ENCODE measurements at regions of chr12 and their contacts with region 1.

Region 1: GRCh38 chr12:121678716-121679580 is 9.5 kb upstream of the MORN3 start:
- DNase-seq: no peak
- ATAC-seq: no peak
- H3K4me3 ChIP-seq: no peak overlapping the region
- H3K27ac ChIP-seq: no peak overlapping the region
- H3K4me1 ChIP-seq: peaks cover 4% of the 10 kb centered on the region
- H3K27me3 ChIP-seq: no peaks in the 10 kb centered on the region
- CTCF ChIP-seq: no peak

Region 2: GRCh38 chr12:121550974-121551634 is 127.8 kb before region 1 on chr12:
- intact Hi-C with region 1: loop called (anchors 5 kb)
- DNase-seq: no peak
- ATAC-seq: peak; percentile 63
- H3K4me3 ChIP-seq: no peak overlapping the region
- H3K27ac ChIP-seq: no peak overlapping the region
- H3K4me1 ChIP-seq: no peaks in the 10 kb centered on the region
- H3K27me3 ChIP-seq: no peaks in the 10 kb centered on the region
- CTCF ChIP-seq: no peak

Measured in upper lobe of right lung (tissue), 1 donor.